Activated CD4-positive, alpha-beta memory T cell treated with anti-CD3 and anti-CD28 coated beads for 36 hours (primary cell): ENCODE measurements at regions of chr17 and their contacts with region 1.

Region 1: DNA sequence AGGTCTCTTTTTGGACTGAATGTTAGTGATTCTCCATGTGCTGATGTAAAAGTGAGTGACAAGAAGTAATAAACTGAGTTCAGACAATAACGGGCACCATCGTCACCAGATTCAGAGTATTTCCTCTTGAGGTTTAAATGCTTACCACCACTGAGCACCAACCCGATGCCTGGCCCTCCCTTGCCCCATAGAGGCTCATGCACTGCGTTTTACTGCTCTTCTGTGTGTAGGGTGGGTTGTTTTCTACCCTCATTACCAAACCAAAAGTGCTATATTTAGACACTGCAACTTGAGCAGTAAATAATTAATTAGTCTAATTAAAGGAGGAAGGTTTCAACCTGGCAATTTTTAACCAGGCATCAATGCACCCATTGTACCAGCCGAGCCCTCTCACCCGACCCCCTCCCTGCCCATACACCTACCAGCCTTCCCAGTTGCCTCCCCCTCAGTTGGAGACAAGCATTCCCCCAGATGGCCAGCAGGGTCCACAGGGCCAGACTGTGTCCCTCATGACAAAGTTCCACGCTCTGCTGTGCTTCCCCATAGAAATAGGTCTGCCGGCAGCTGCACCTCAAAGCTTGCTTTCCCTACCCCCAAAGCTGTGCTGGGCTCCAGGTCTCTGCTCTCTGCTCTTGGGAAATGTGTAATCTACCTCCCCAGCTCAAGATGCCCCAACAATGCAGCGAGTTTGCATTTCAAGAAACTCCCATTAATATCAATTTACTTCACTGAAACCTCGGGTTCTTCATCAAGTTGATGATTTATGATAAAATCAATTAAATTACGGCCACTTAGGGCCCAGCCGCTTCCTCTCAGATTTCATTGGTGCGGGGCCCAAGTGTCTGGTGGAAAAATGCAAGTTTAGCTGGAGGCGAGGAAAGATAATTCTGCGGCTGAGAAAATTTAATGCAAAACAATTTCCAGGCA is 16.0 kb downstream of the HOXB4 start:
- DNase-seq: no peak
- H3K4me3 Mint-ChIP-seq: no peak overlapping the region
- H3K27ac Mint-ChIP-seq: no peak overlapping the region
- H3K4me1 Mint-ChIP-seq: no peaks in the 10 kb centered on the region
- H3K27me3 Mint-ChIP-seq: peaks cover 3% of the 10 kb centered on the region

Region 2: DNA sequence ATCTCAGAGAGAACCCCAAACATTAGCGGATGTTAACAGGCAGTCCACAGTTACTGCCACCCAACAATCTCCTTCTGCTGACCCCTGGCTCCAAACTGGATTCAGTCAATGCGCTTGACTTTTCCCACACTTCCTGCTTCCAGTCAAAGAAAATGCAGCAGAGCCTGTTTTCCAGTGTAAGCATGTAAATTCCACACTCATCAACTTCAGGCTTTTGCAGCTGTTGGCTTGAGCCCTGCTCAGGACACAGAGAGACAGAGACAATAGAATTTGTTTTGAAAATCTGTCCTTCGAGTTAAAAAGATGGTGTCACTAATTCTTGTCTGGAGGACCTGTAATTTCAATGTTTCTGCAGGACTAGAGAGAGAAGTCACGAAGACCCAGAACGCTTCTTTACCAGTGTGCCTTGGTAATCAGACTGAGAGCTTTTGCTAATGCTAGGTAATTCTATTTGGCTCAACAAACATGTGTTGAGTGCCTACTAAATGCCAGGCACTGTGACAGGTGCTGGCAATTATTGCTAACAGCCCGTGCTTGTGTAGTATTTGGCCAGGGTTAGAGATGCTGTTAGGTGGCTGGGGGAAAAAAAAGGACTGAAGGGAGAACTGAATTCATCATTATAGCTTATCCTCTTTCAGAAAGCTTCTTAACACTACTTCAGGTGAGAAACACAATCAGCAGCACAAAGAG is 63.8 kb before region 1 on chr17:
- CTCF ChIA-PET with region 1: no interaction called
- POLR2A ChIA-PET with region 1: no interaction called
- intact Hi-C with region 1: loop called (anchors 2 kb)
- DNase-seq: no peak
- H3K4me3 Mint-ChIP-seq: no peak overlapping the region
- H3K27ac Mint-ChIP-seq: no peak overlapping the region
- H3K4me1 Mint-ChIP-seq: no peaks in the 10 kb centered on the region
- H3K27me3 Mint-ChIP-seq: peaks cover 9% of the 10 kb centered on the region